Naive thymus-derived CD4-positive, alpha-beta T cell (primary cell): ENCODE measurements at regions of chr2 and their contacts with region 1.

Region 1: GRCh38 chr2:240566203-240567136 is 1.8 kb upstream of the RNPEPL1 start:
- DNase-seq: peak; percentile 86 to 96 (median 92)
- ATAC-seq: peak; percentile 79
- H3K4me3 ChIP-seq: peak overlapping the region; percentile 82
- H3K4me3 Mint-ChIP-seq: peak overlapping the region; percentile 88 to 98 (median 94)
- H3K27ac ChIP-seq: peak overlapping the region; percentile 85
- H3K27ac Mint-ChIP-seq: peak overlapping the region; percentile 90 to 99 (median 98)
- H3K4me1 ChIP-seq: peaks cover 80% of the 10 kb centered on the region in 2 donors
- H3K4me1 Mint-ChIP-seq: peaks cover 53 to 82% (median 75%) of the 10 kb centered on the region in 7 donors
- H3K27me3 ChIP-seq: no peaks in the 10 kb centered on the region
- H3K27me3 Mint-ChIP-seq: no peaks in the 10 kb centered on the region

Region 2: DNA sequence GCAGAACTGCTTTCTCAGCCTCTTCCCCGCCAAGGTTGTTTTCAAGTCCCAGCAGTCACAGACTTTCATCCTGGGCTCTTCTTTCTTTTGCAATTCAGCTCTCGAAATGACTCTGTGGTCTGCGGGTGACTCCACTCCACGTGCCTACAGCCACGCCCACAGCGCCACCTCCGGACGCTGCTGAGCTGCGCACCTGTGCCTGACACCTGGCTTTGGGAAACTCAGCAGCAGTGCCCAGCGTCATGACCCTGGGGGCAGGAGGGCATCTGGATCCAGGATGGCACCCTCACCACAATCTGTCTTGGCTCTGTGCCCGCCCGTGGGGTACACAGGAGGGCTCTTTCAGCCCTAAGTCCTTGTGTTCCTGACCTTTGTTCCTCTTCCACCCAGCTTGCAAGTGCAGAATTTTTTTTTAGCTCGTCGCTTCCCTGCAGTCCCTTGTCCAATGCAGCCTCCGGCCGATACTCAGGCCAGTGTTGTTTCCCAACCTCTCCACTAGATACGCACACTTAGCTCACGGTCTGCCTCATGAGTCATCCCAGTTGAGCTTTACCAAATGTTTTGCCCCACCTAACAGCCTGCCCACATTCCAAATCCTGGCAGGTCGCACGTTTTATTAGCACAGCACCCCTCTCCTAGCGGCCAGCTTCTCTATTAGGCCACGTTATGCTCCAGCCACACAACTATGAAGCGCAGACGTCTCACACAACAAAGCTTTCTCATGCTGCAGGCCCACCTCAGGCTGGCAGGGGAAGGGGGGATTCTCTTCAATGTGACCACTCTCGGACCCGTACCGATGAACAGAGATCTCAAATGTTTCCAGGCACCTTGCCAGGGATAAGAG is 13.5 kb after region 1 on chr2:
- CTCF ChIA-PET with region 1: interaction called, 61 read pairs
- POLR2A ChIA-PET with region 1: interaction called, 264 read pairs
- intact Hi-C with region 1: loop called (anchors 1 kb)
- DNase-seq: peak; percentile 52 to 81 (median 67)
- ATAC-seq: peak; percentile 91
- H3K4me3 ChIP-seq: no peak overlapping the region
- H3K4me3 Mint-ChIP-seq: peak overlapping the region in 9 of 10 donors; percentile 9 to 58 (median 45)
- H3K27ac ChIP-seq: peak overlapping the region; percentile 33
- H3K27ac Mint-ChIP-seq: peak overlapping the region; percentile 36 to 87 (median 78)
- H3K4me1 ChIP-seq: peaks cover 19 to 22% of the 10 kb centered on the region in 2 donors
- H3K4me1 Mint-ChIP-seq: peaks cover 33 to 62% (median 48%) of the 10 kb centered on the region in 7 donors
- H3K27me3 ChIP-seq: no peaks in the 10 kb centered on the region
- H3K27me3 Mint-ChIP-seq: no peaks in the 10 kb centered on the region

Region 3: DNA sequence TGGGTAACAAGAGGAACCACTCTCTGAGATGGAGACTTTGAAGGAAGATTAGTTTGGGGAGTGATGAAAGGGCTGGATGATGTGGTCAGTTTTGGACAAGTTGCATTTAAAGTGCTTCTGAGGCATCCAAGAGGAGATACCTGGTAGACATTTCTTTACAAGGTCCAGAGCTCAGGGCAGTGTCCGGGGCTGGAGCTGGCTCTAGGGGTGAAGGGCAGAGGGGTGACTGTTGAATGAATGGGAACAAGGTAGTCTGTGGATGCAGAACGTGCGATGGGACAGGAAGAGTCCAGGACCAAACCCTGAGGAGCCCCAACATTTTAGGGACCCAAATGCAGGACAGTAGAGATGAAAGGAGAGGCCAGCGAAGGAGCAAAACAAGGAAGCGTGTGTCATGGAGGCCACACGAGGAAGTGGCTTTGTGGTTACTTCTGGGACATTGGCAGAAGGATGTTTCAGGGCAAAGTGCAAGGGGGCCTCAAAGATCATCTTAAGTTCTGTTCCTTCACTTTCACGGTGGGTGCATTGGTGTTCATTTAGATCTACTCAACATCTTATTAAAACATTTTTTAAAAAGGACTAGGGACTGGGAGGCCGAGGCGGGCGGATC is 45.2 kb after region 1 on chr2:
- CTCF ChIA-PET with region 1: no interaction called
- POLR2A ChIA-PET with region 1: no interaction called
- intact Hi-C with region 1: loop called in 1 of 2 experiments (anchors 2 kb)
- DNase-seq: no peak
- ATAC-seq: peak; percentile 73
- H3K4me3 ChIP-seq: no peak overlapping the region
- H3K4me3 Mint-ChIP-seq: peak overlapping the region in 4 of 10 donors; percentile 11 to 72 (median 30)
- H3K27ac ChIP-seq: no peak overlapping the region
- H3K27ac Mint-ChIP-seq: peak overlapping the region in 5 of 9 donors; percentile 14 to 70 (median 33)
- H3K4me1 ChIP-seq: peaks cover 0 to 16% of the 10 kb centered on the region in 2 donors
- H3K4me1 Mint-ChIP-seq: peaks cover 0 to 28% (median 11%) of the 10 kb centered on the region in 7 donors
- H3K27me3 ChIP-seq: no peaks in the 10 kb centered on the region
- H3K27me3 Mint-ChIP-seq: no peaks in the 10 kb centered on the region

Region 4: DNA sequence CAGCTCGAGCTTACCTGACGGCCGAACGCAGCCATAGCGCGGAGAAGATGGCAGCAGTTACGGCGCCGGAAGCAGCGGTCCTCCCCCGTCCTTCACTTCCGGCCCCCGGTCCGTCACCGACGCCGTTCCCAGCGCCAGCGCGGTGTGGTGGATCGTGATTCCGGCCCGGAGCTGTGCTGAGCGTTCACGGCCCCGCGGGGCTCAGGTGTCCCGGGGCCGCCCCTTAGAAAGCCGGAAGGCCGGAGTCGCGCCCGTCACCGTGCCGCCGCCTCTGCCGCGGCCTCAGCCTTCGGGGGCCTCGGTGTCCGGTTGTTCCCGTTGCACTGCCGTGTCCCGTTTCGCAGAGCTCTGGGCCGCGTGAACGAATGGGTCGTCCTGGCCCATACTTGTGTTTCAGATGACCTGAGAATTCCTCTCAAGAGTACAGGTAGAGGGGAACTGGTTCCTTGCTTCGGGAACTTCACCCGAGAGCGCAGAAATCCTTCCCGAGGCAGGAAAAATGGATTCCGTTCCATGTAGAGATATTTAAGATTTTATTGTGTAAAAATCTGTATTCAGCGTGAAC is 535.9 kb after region 1 on chr2 and contains the start of gene MTERF4:
- CTCF ChIA-PET with region 1: no interaction called
- POLR2A ChIA-PET with region 1: no interaction called
- intact Hi-C with region 1: loop called in 1 of 2 experiments (anchors 5 kb)
- DNase-seq: peak; percentile 80 to 91 (median 86)
- ATAC-seq: peak; percentile 98
- H3K4me3 ChIP-seq: peak within 1 kb of the TSS; percentile 89
- H3K4me3 Mint-ChIP-seq: peak within 1 kb of the TSS; percentile 86 to 99 (median 96)
- H3K27ac ChIP-seq: peak within 1 kb of the TSS; percentile 92
- H3K27ac Mint-ChIP-seq: peak within 1 kb of the TSS; percentile 96 to 99 (median 99)
- H3K4me1 ChIP-seq: peaks cover 29 to 55% of the 10 kb centered on the region in 2 donors
- H3K4me1 Mint-ChIP-seq: peaks cover 27 to 84% (median 64%) of the 10 kb centered on the region in 7 donors
- H3K27me3 ChIP-seq: no peaks in the 10 kb centered on the region
- H3K27me3 Mint-ChIP-seq: no peaks in the 10 kb centered on the region
- total RNA-seq, gene MTERF4: 45.3 to 214 (median 91.8) TPM

Region 5: DNA sequence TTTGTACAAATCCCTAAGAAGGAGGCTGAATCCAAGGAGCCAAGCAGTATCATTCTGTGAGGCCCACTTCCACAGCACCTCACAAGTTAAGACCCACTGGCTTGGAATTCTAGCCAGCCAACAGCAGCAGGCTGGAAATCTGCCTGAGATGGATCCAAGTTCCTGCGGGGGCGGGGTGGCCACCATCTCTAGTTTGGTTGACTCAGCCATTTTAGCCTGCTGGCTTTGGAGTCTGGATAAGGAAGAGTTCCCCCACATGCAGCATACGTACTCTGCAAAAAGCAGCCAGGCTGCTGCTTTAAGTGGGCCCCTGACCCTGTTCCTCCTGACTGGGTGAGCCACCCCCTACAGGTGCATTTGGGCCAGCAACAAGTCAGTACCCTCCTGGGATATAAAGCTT is 854.9 kb after region 1 on chr2:
- CTCF ChIA-PET with region 1: no interaction called
- POLR2A ChIA-PET with region 1: no interaction called
- intact Hi-C with region 1: no loop called
- DNase-seq: no peak
- ATAC-seq: no peak
- H3K4me3 ChIP-seq: no peak overlapping the region
- H3K4me3 Mint-ChIP-seq: no peak overlapping the region
- H3K27ac ChIP-seq: no peak overlapping the region
- H3K27ac Mint-ChIP-seq: no peak overlapping the region
- H3K4me1 ChIP-seq: no peaks in the 10 kb centered on the region
- H3K4me1 Mint-ChIP-seq: no peaks in the 10 kb centered on the region
- H3K27me3 ChIP-seq: no peaks in the 10 kb centered on the region
- H3K27me3 Mint-ChIP-seq: no peaks in the 10 kb centered on the region

Region 6: DNA sequence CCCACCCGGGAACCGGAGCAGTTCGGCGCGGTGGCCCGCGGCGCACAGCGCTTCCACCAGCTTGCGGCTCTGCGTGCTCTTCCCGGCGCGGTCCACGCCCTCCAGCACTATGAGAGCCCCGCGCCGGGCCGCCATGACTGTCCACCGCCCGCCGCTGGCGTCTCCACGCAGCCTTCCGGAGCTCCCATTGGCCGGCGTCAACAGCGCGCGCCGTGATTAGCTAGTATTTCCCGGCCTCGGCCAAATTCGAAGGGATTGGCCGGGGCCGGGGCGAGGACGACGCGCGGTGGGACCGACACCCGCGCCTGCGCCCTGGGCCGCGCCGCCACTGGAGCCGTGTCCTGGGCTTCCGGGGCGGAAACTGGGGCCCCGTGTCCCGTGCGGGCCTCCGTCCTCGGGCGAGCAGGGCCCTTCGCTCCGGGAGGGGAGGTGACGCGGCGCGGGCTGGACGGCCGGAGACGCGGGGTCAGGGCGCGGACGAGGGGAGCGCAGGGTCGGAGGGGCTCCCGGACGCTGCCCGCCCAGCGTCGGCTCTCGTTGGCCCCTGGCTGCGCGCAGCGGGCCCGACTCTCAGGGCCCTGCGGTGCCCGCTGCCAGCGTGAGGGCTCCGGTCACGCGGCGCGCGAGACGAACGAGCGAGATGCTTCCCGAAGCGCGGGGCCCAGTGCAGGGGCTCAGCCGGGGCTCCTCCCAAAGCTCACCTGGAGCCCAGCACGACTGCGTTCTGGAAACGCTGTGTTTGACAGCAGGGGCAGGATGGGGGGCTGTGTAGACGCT is 1120.4 kb after region 1 on chr2 and contains the start of gene DTYMK:
- CTCF ChIA-PET with region 1: no interaction called
- POLR2A ChIA-PET with region 1: no interaction called
- intact Hi-C with region 1: loop called in 1 of 2 experiments (anchors 5 kb)
- DNase-seq: peak; percentile 92 to 98 (median 97)
- ATAC-seq: peak; percentile 97
- H3K4me3 ChIP-seq: peak within 1 kb of the TSS; percentile 91
- H3K4me3 Mint-ChIP-seq: peak within 1 kb of the TSS; percentile 84 to 98 (median 95)
- H3K27ac ChIP-seq: peak within 1 kb of the TSS; percentile 81
- H3K27ac Mint-ChIP-seq: peak within 1 kb of the TSS; percentile 74 to 96 (median 88)
- H3K4me1 ChIP-seq: peaks cover 8 to 18% of the 10 kb centered on the region in 2 donors
- H3K4me1 Mint-ChIP-seq: peaks cover 4 to 40% (median 31%) of the 10 kb centered on the region in 7 donors
- H3K27me3 ChIP-seq: no peaks in the 10 kb centered on the region
- H3K27me3 Mint-ChIP-seq: no peaks in the 10 kb centered on the region
- total RNA-seq, gene DTYMK: 12.0 to 65.7 (median 17.0) TPM